ENCODE measurements at regions of chr3 and their contacts with region 1.

Region 1: DNA sequence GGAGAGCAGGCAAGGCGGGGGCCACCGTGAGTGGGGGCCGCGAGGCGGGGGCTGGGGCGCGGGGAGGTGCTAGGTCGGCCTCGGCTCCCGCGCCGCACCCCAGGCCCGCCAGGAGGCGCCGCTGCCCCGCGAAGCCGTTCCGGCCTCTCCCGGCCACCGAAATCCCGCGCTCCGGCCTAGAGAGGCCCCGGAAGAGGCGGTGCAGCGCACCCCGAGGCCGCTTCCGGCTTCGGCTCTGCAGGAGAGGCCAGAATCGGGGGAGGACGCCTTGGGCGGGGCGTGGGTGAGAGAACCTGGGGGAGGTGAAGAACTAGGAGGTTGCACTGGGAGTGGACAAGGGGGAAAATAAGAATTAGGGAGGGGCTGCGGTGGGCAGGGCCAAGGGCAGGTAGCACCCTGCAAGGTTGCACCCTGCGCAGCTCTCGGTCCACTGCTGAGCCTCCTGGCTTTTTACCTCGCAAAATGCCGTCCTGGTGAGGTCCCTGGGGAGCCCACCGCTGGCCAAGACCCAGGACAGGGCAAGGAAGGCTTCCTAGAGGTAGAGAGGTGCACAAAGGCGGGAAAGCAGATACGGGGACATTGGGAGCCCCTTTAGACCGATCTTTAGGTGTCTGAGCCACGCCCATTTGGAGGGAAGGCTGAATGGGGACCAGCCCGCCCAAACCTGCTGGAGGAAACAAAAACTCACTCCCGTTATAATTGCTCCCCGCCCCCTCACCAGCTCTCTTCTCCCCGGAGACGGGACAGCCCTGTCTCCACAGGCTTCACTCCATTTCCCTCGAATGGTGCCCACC is 8.4 kb upstream of the GNAI2 start:
- DNase-seq: peak; percentile 88 to 93
- ATAC-seq: peak; percentile 88 to 93 (median 92)
- H3K4me3 ChIP-seq: peak overlapping the region; percentile 55 to 96 (median 74)
- H3K27ac ChIP-seq: peak overlapping the region in 9 of 10 donors; percentile 76 to 89 (median 80)
- H3K4me1 ChIP-seq: peaks cover 8 to 53% (median 22%) of the 10 kb centered on the region in 9 donors
- H3K27me3 ChIP-seq: no peaks in the 10 kb centered on the region
- CTCF ChIP-seq: peak; percentile 80 to 99 (median 96)

Region 2: GRCh38 chr3:50121416-50122032 is 106.1 kb before region 1 on chr3:
- intact Hi-C with region 1: loop called in 1 of 10 experiments (anchors 2 kb)
- DNase-seq: peak; percentile 69 to 72
- ATAC-seq: peak; percentile 78 to 92 (median 86)
- H3K4me3 ChIP-seq: no peak overlapping the region
- H3K27ac ChIP-seq: no peak overlapping the region
- H3K4me1 ChIP-seq: peaks cover 2 to 28% (median 8%) of the 10 kb centered on the region in 9 donors
- H3K27me3 ChIP-seq: no peaks in the 10 kb centered on the region
- CTCF ChIP-seq: peak; percentile 63 to 92 (median 85)

Region 3: GRCh38 chr3:50192689-50193141 is 34.9 kb before region 1 on chr3:
- intact Hi-C with region 1: loop called (anchors 1 to 5 kb)
- DNase-seq: peak; percentile 61 to 74
- ATAC-seq: peak in 4 of 8 donors; percentile 22 to 43 (median 33)
- H3K4me3 ChIP-seq: no peak overlapping the region
- H3K27ac ChIP-seq: no peak overlapping the region
- H3K4me1 ChIP-seq: peaks cover 0 to 28% (median 21%) of the 10 kb centered on the region in 9 donors
- H3K27me3 ChIP-seq: peaks cover 17 to 44% (median 31%) of the 10 kb centered on the region in 7 donors
- CTCF ChIP-seq: peak; percentile 84 to 93 (median 88)

Region 4: DNA sequence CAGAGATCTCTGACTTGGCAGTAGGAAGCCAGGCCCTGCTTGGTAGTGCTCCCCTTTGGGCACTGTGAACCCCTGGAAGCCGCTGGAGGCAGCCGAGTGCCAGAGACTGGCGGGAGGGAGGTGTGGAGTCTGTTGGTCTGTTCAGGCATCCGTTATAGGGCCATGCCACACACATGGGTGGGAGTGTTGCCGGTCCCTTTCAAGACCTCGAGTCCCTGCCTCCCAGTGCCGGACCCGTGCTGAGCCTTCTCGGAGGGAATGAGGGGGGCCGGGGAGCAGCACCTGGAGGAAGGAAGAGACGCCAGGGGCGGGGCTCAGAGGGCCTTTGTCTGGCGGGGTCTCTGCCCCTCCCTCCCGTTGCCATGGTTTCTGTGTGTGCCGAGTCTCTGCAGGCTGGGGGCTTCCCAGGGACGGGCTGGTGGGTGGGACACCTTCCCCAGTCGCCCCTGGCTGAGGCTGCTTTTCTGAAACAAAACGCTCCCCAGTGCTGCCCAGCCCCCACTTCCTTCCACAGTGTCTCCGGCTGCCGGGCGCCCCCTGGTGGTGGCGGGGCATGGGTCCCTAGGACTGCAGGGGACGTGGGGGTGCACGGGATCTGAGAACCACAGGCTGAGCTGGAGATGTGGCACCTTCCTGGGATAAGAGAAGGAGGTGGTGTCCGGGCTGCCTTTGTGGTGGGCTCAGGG is 18.4 kb after region 1 on chr3:
- intact Hi-C with region 1: loop called in 6 of 10 experiments (anchors 1 to 2 kb)
- DNase-seq: peak; percentile 93
- ATAC-seq: peak; percentile 77 to 88 (median 82)
- H3K4me3 ChIP-seq: peak overlapping the region; percentile 12 to 57 (median 46)
- H3K27ac ChIP-seq: peak overlapping the region; percentile 83 to 100 (median 94)
- H3K4me1 ChIP-seq: peaks cover 72 to 100% (median 99%) of the 10 kb centered on the region in 9 donors
- H3K27me3 ChIP-seq: no peaks in the 10 kb centered on the region
- CTCF ChIP-seq: peak; percentile 97 to 99 (median 99)

Region 5: DNA sequence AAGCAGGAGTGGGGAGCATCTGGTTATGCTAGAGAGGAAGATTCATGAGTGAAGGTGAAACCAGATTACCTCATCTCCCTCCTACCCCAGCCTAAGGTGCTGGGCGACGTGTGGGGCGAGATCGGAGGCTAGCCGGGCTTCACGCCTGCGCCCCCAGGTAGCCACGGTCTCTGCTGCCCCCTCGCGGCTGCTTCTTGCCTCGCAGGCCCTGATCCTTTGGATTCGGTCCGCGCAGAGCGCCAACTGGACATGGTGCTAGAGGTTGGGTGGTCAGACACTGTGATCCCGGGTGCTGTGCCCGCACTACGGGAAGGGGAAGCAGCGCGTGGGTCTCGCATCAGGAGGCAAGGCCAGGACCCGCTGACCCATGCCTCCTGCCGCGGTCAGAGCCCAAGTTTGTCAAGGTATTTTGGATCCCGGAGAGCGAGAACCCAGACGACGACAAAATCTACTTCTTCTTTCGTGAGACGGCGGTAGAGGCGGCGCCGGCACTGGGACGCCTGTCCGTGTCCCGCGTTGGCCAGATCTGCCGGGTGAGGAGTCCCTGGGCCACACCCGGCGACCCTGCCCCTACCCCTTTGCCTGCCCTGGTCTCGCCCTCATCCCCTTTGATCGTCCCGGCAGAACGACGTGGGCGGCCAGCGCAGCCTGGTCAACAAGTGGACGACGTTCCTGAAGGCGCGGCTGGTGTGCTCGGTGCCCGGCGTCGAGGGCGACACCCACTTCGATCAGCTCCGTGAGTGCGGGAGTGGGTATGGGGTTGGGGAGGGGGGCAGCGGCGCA is 45.5 kb after region 1 on chr3:
- intact Hi-C with region 1: loop called (anchors 1 to 5 kb)
- DNase-seq: peak; percentile 83 to 90
- ATAC-seq: peak; percentile 43 to 84 (median 70)
- H3K4me3 ChIP-seq: peak overlapping the region in 9 of 10 donors; percentile 18 to 54 (median 38)
- H3K27ac ChIP-seq: peak overlapping the region in 5 of 10 donors; percentile 1 to 44 (median 41)
- H3K4me1 ChIP-seq: peaks cover 2 to 60% (median 42%) of the 10 kb centered on the region in 9 donors
- H3K27me3 ChIP-seq: peaks cover 0 to 47% (median 10%) of the 10 kb centered on the region in 7 donors
- CTCF ChIP-seq: peak; percentile 96 to 99 (median 98)

Region 6: DNA sequence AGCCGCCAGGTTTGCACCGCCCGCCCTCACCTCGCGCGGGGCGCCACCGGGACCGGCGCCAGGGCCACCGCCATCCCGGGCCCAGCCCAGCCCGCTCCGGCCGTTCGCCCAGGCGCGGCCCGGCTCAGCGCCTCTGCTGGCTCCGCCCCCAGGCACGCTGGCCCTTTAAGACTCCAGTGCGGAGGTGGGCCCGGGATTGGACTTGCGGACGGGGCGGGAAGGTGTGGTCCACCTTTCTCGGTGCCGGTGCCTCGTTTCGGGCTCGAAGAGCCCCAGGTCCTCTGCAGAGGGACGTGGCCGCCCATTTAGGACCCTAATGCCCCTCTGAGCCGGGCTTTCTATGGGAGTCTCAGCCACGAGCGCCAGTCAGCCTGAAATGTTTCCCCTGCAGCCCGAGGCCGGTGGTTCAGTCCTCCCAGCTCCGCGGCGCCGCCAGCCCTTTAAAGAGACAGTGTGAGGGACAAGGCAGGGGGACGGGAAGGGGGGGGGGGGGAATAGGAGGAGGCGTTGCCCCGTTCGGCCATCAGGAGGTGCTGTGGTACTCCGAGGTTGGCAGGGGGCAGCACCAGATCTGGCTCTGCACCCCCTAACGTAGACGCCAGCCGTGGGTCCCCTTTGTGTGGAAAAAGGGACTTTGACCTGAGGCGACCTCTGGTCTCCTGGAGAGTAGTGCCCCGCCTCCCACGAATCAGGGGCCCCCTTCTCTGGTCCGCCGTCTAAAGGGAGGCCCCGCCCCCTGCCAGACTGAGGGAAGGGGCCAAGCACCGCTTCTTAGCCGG is 93.9 kb after region 1 on chr3:
- intact Hi-C with region 1: loop called in 1 of 10 experiments (anchors 2 kb)
- DNase-seq: peak; percentile 90 to 91
- ATAC-seq: peak; percentile 60 to 79 (median 74)
- H3K4me3 ChIP-seq: peak overlapping the region; percentile 57 to 88 (median 80)
- H3K27ac ChIP-seq: peak overlapping the region; percentile 91 to 99 (median 97)
- H3K4me1 ChIP-seq: peaks cover 29 to 90% (median 71%) of the 10 kb centered on the region in 9 donors
- H3K27me3 ChIP-seq: no peaks in the 10 kb centered on the region
- CTCF ChIP-seq: peak; percentile 28 to 79 (median 64)

Measured in heart right ventricle (tissue), 16 donors.